HEK293T (cell line): ENCODE measurements at regions of chr15 and their contacts with region 1.

Region 1: GRCh38 chr15:43285609-43286037 is 18.9 kb upstream of the TGM5 start:
- DNase-seq: peak; percentile 44

Region 2: DNA sequence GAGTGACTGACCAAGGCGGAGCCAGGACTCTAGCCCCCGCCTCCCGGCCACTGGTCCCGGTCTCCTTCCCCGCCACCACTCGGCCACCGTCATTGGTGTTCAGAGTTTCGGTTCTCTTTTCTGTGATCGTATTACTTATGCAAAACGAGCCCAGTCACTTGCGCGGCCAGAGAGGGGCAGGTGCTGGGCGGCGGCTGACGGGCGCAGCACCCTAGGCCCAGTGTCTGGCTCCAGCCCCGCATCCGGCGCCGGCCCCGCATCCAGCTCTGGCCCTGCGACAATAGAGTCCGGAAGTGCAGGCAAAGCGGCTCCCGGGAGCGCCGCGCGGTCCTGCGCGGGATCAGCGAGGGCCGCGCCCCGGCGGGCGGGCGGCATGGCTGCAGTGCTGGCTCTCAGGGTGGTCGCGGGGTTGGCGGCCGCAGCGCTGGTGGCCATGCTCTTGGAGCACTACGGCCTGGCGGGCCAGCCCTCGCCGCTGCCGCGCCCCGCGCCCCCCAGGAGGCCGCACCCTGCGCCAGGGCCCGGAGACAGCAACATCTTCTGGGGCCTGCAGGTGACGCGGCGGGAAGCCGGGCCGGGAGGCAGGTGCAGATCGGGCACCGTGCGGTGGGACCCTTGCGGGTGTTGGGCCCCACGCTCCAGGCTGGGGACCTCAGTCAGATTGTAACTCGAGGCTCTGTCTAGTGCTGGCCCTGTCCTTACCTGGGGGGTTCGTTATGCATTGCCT is 152.0 kb before region 1 on chr15 and contains the start of gene TMEM62:
- CTCF ChIA-PET with region 1: no interaction called
- POLR2A ChIA-PET with region 1: no interaction called
- DNase-seq: peak; percentile 58

Region 3: DNA sequence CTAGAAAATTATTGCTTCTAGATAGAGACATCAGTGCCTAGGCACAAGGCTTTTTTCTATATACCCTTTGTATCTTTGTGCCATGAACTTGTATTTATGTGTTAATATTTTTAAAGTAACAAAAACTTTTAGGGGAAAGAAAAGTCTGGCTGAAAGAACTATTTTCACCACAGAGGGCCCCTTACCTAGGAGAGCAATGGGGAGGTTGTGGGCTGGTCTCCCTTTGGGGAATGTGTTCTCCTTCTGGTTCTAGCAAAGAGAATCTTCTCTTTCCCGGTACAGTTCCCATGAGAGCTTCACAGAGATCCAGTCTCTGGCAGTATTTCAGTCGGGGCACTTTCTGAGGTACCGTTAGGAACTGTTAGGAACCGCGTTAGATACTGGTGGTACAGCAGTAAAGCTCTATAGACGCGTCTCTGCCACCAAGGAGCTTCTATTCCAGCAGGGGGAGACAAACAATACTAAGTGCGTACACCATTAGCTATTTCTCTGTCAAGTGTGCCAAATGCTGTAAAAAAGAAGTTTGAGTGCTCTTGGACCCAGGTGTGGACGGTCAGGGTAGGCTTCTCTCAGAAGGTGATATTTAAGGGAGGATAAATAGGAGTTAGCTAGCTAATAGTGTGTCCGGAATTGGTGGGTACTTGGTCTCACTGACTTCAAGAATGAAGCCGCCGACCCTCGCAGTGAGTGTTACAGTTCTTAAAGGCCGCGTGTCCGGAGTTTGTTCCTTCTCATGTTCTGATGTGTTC is 60.2 kb before region 1 on chr15:
- CTCF ChIA-PET with region 1: interaction called, 26 read pairs
- POLR2A ChIA-PET with region 1: no interaction called
- DNase-seq: peak; percentile 30

Region 4: GRCh38 chr15:43241100-43241499 is 44.5 kb before region 1 on chr15:
- CTCF ChIA-PET with region 1: no interaction called
- POLR2A ChIA-PET with region 1: no interaction called
- DNase-seq: no peak